ENCODE measurements at regions of chr17 and their contacts with region 1.

Region 1: DNA sequence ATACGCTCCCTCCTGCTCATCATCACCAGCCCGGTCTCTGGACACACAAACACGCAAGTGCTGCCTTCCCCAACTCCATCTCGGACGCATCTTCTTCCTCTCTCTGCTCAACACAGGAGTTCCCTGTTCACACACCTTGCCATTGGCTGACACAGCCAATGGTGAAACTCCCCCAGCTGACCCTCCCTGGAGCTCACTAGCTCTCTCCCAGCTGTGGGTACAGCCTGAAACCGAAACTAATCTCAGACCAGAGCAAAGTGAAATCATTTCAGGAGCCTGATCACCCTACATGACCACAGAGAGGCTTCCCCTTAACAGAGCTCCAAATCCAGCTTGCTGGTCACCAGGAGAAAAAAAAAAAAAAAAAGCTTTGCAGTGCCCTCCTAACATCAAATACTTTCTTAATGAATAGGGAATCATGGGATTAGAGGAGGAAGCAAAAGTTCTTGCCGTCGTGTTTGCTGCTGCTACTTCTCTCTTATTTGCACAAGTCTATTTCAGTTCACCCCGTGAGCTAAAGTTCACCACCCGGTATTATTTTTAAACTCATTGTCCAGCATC is 8.3 kb downstream of the CUEDC1 start:
- DNase-seq: peak in 1 of 2 experiments; percentile 60
- H3K4me3 ChIP-seq: no peak overlapping the region
- H3K27ac ChIP-seq: peak overlapping the region; percentile 95
- H3K4me1 ChIP-seq: peaks cover 63% of the 10 kb centered on the region
- H3K27me3 ChIP-seq: no peaks in the 10 kb centered on the region
- CTCF ChIP-seq: no peak

Region 2: DNA sequence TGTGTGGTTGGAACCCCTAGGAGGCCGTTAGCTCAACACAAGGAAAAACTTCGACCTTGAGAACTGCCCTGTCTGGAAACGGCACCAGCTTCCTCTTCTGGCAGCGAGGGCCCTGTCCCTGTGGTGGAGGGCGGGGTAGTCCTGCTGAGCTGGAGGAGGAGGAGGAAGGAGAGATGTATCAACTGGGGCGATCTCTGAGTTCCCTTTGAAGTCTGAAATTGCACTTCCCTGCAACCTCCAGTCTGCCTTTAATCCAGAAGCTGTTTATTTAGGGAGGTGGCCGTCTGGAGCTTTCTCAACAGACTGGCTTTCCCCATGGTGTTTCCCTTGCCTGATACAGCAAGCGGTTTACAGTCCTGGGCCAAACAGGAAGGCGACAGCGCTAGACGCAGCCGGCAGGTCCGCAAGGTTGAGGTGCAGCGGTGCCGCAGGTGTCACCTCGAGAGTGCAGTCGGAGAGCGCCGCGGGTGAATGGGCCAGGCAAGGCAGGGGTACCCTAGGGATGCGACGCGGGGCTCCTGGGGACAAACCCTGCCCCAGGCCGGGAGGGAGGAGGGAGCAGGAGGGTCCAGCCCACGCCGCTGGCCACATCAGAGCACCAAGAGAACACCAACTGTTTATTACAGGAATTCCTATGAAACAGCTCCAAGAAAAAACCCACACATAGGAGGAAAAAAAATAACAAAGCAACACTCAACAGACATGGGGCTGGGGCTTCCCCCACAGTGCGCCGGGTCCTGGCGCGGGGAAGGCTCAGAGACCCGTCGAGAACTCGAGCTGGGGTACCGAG is 85.7 kb before region 1 on chr17:
- CTCF ChIA-PET with region 1: interaction called, 4 read pairs
- POLR2A ChIA-PET with region 1: no interaction called
- intact Hi-C with region 1: loop called (anchors 5 kb)
- DNase-seq: peak; percentile 63 to 89
- H3K4me3 ChIP-seq: peak overlapping the region; percentile 52
- H3K27ac ChIP-seq: no peak overlapping the region
- H3K4me1 ChIP-seq: peaks cover 18% of the 10 kb centered on the region
- H3K27me3 ChIP-seq: no peaks in the 10 kb centered on the region
- CTCF ChIP-seq: no peak

Region 3: DNA sequence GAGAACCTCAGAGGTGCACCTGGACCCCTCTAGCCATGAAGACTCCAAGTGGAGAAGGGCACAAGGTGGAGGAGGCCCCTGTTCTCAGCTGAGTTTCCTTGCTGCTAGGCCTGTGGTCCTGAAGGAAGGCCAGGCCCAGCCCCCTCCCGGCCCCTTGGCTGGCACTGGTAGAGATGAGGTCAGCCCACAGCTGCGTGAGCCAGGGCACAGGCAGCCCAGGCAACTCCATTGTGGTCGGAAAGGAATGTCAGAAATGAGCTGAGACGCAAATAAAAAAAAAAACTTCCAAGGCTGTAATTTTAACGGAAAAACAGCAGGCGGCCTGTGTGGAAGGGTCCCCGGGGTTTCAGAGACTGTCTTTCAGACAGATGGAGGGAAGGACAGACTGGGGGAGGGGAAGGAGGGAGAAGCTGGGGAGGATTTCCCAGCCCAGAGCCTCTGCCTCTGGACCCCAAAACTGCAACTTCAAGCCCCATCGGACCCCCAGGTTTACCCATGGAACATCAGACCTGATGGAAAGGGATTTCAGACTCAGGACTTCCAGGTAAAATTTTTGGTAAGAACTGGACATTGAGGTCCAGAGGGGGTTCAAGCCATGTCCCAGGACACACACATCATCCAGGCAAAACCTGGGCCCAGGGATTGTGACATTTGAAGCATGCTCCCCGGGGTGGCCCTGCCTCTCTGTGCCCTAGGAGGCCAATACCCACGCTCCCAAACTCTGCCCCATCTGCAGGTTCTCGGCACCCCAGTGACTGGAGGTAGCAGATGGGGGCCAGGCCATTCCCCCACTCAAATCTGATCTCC is 71.4 kb before region 1 on chr17:
- CTCF ChIA-PET with region 1: interaction called, 7 read pairs
- POLR2A ChIA-PET with region 1: interaction called, 16 read pairs
- intact Hi-C with region 1: loop called (anchors 2 kb)
- DNase-seq: peak; percentile 88 to 92
- H3K4me3 ChIP-seq: no peak overlapping the region
- H3K27ac ChIP-seq: no peak overlapping the region
- H3K4me1 ChIP-seq: peaks cover 55% of the 10 kb centered on the region
- H3K27me3 ChIP-seq: no peaks in the 10 kb centered on the region
- CTCF ChIP-seq: peak; percentile 77

Region 4: GRCh38 chr17:57892829-57893595 is 53.9 kb before region 1 on chr17:
- CTCF ChIA-PET with region 1: interaction called, 5 read pairs
- POLR2A ChIA-PET with region 1: interaction called, 7 read pairs
- intact Hi-C with region 1: loop called (anchors 1 kb)
- DNase-seq: peak; percentile 92 to 99
- H3K4me3 ChIP-seq: peak overlapping the region; percentile 41; the same call in 1 of the 2 replicates
- H3K27ac ChIP-seq: peak overlapping the region; percentile 90
- H3K4me1 ChIP-seq: peaks cover 38% of the 10 kb centered on the region
- H3K27me3 ChIP-seq: no peaks in the 10 kb centered on the region
- CTCF ChIP-seq: peak; percentile 58; the same call in 1 of the 2 replicates

Region 5: DNA sequence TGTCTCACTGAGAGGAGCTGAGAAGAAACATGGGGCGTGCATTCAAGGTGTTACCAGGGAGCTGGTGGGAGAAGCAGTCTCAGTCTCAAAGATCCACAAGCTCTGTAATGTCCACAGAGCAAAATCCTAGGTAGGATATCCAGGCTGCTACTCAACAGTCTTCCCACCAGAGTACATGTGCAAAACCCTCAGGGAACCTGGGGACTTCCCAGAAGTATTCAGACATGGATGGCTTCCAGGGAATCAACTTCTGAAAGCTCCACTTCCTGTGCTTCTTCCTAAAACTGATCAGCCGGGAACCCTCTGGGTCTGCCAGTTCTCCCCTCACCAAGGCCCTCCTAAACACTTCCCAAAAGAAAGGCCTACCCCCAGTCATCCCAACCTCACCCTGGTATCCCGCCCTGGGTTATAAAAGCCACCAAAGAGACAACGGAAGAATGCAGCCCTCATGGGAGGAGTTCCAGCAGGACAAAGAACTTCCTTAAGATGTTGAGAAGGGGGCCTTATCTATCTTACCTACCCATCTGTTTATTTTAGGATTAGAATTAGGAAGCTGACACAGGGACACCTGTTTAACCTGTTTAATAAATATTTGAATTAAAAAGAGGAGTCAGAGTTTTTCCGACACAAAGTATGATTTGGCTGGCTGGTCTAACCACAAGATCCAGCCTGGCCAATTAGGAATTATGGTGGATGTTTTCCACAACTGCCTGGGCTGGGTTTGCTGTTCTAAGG is 28.7 kb before region 1 on chr17:
- CTCF ChIA-PET with region 1: interaction called, 4 read pairs
- POLR2A ChIA-PET with region 1: no interaction called
- intact Hi-C with region 1: loop called (anchors 2 kb)
- DNase-seq: peak in 1 of 2 experiments; percentile 84
- H3K4me3 ChIP-seq: no peak overlapping the region
- H3K27ac ChIP-seq: peak overlapping the region; percentile 2
- H3K4me1 ChIP-seq: peaks cover 51% of the 10 kb centered on the region
- H3K27me3 ChIP-seq: no peaks in the 10 kb centered on the region
- CTCF ChIP-seq: no peak

Region 6: GRCh38 chr17:57930239-57930638 is 16.6 kb before region 1 on chr17:
- CTCF ChIA-PET with region 1: interaction called, 5 read pairs
- POLR2A ChIA-PET with region 1: interaction called, 25 read pairs
- intact Hi-C with region 1: no loop called
- DNase-seq: no peak
- H3K4me3 ChIP-seq: no peak overlapping the region
- H3K27ac ChIP-seq: no peak overlapping the region
- H3K4me1 ChIP-seq: peaks cover 25% of the 10 kb centered on the region
- H3K27me3 ChIP-seq: no peaks in the 10 kb centered on the region
- CTCF ChIP-seq: no peak

Region 7: GRCh38 chr17:57987580-57988421 is 40.9 kb after region 1 on chr17 and contains the start of gene VEZF1:
- CTCF ChIA-PET with region 1: interaction called, 6 read pairs
- POLR2A ChIA-PET with region 1: no interaction called
- intact Hi-C with region 1: loop called (anchors 2 kb)
- DNase-seq: peak in 1 of 2 experiments; percentile 70
- H3K4me3 ChIP-seq: peak within 1 kb of the TSS; percentile 62
- H3K27ac ChIP-seq: peak within 1 kb of the TSS; percentile 39
- H3K4me1 ChIP-seq: peaks cover 29% of the 10 kb centered on the region
- H3K27me3 ChIP-seq: no peaks in the 10 kb centered on the region
- CTCF ChIP-seq: no peak
- total RNA-seq, gene VEZF1: 29.9 and 50.9 TPM in 2 replicates

Region 8: DNA sequence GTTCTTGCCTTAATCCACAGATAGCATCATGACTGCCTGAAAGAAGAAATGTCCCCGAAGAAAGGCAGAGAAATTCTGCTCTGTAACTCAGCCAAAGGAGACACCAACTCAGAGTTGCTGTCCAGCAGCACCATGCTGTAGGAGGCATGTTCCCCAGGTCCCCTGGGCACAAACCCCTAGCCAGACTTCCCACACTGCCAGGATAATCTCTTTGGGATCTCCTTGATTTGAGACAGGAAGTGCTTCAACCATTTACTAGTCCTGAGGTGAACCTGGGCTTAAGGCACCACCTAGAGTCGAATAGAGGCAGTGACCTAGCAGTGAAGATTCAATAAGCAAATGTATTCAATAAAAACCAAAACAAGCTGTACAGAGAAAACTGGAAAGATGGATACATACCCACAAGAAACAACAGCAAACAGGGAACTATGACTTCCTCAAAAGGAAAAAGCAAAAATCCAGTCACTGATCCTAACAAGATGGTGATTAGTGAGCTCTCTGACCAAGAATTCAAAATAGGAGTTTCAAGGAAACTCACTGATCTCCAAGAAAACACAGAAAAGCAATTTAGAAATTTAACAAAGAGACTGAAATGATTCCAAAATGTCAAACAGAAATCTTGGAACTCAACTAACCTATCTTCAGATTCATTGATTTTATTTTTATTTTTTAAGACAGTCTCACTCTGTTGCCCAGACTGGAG is 225.6 kb after region 1 on chr17:
- CTCF ChIA-PET with region 1: no interaction called
- POLR2A ChIA-PET with region 1: no interaction called
- intact Hi-C with region 1: no loop called
- DNase-seq: peak in 1 of 2 experiments; percentile 49
- H3K4me3 ChIP-seq: no peak overlapping the region
- H3K27ac ChIP-seq: no peak overlapping the region
- H3K4me1 ChIP-seq: no peaks in the 10 kb centered on the region
- H3K27me3 ChIP-seq: peaks cover 79% of the 10 kb centered on the region
- CTCF ChIP-seq: peak; percentile 74